ENCODE measurements at regions of chr7 and their contacts with region 1.

Region 1: DNA sequence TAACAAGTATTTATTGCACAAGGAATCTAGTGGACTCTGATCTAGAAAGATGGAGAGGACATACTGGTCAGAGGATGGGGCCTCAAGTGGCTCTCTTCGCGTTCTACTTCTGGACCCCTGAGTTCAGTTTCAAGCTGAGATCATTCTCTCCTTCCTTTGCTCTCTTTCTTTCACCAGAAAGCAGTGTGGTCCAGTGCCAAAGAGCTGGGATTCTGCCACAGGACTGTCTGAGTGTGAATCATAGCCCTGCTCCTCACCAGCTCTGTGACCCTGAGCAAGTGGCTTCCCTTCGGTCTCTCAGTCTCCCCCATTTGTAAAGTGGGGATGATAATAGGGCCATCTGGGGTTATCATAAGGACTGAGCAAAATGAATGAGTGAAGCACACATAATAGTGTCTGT is 715.2 kb downstream of the SUGCT start:
- DNase-seq: no peak
- H3K4me3 ChIP-seq: no peak overlapping the region
- H3K27ac ChIP-seq: no peak overlapping the region
- H3K4me1 ChIP-seq: no peaks in the 10 kb centered on the region
- H3K27me3 ChIP-seq: no peaks in the 10 kb centered on the region
- CTCF ChIP-seq: no peak

Region 2: GRCh38 chr7:41013117-41013516 is 163.1 kb after region 1 on chr7:
- CTCF ChIA-PET with region 1: no interaction called
- POLR2A ChIA-PET with region 1: interaction called, 11 read pairs
- intact Hi-C with region 1: no loop called
- DNase-seq: no peak
- H3K4me3 ChIP-seq: no peak overlapping the region
- H3K27ac ChIP-seq: no peak overlapping the region
- H3K4me1 ChIP-seq: no peaks in the 10 kb centered on the region
- H3K27me3 ChIP-seq: no peaks in the 10 kb centered on the region
- CTCF ChIP-seq: no peak

Measured in A673 (cell line).